AG04449 (cell line): ENCODE measurements at regions of chr2 and their contacts with region 1.

Region 1: GRCh38 chr2:31333527-31334183 is 80.9 kb downstream of the XDH start:
- DNase-seq: no peak
- H3K4me3 ChIP-seq: no peak overlapping the region
- CTCF ChIP-seq: peak; percentile 82

Region 2: DNA sequence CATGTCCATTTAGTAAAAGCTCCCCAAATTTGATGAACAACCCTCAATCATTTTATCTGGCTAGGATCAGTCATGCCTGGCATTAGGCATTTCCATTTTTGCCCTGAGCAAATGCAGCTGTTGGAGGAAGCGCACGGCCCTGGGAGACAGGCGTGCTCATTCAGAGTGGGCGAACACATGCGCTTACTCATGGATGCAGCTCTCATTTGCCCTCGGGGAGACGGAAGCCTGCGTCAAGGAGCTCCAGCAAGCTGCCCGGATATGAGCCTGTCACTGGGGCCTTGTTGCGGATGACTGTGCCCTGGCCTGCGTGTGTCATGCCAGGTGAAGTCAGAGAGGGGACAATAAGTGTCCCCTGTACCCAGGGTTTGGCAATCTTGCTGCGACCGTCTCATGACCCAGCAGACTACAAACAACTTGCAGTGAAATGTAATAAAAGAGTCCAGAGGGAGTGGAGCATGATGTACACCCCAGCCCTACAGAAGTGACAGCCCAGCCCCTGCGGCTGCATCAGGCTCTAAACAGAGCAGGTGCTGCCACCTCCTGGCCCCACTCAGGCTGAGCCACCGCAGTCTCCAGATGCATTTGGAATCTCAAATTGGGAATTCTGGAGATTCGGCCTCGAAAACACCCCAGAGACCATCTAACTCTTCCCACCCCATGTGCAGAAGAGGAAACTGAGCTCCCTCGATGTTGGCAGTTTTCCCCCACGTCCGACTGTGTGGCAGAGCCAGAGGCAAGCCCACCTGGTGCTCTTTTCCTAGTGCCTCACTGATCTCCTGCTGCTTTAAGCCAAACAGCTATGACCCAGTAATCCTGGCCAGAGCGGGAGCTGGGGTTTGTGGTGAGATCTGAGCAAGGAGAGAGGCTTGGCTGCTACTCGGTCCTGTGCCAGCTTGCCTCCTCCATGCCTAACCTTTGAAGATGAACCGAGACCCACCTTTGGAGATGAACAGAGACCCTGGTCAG is 1307.3 kb before region 1 on chr2:
- CTCF ChIA-PET with region 1: no interaction called
- POLR2A ChIA-PET with region 1: no interaction called
- DNase-seq: peak; percentile 26
- H3K4me3 ChIP-seq: no peak overlapping the region
- CTCF ChIP-seq: peak; percentile 75

Region 3: DNA sequence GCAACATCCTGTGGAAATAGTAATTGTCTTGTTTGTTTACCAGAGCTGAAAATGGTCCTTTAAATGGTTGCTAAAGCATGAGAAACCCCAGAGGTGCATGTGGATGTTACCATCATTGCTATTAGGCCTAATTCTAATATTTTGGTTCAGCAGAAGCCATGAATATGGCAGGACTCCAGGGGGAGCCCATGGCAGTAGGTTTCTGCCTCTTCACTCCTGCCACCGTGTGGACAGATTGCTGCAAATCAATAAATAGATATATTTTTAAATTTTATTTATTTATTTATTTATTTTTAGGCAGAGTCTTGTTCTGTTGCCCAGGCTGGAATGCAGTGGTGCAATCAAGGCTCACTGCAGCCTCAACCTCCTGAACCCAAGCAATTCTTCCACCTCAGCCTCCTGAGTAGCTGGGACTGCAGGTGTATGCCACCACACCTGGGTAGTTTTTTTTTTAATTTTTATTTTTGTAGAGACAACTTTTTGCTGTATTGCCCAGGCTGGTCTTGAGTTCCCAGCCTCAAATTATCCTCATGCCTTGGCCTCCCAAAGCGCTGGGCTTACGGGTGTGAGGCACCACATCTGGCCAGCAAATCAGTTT is 471.5 kb before region 1 on chr2:
- CTCF ChIA-PET with region 1: interaction called, 37 read pairs
- POLR2A ChIA-PET with region 1: no interaction called
- DNase-seq: peak; percentile 17
- H3K4me3 ChIP-seq: no peak overlapping the region
- CTCF ChIP-seq: peak; percentile 68

Region 4: DNA sequence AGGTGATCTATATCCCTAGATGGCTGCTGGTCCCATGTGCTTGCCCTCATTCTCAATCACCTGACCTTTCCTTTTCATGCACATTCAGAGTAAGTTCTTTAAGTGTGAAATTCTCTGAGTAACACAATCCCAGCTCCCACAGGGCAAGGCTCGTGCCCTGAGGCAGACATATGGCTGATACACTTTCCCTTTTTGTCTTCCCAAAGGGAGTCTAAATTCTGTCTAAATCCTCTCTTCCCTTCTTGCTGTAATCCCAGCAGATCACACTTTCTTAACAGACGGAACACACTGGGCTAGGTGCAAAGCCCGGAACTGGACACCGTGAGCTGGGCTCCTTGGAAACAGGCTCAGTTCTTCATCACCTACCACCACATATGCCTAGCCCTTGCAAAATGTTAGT is 343.0 kb before region 1 on chr2:
- CTCF ChIA-PET with region 1: no interaction called
- POLR2A ChIA-PET with region 1: no interaction called
- DNase-seq: no peak
- H3K4me3 ChIP-seq: no peak overlapping the region
- CTCF ChIP-seq: no peak

Region 5: GRCh38 chr2:31101701-31102100 is 232.0 kb before region 1 on chr2:
- CTCF ChIA-PET with region 1: no interaction called
- POLR2A ChIA-PET with region 1: no interaction called
- DNase-seq: no peak
- H3K4me3 ChIP-seq: no peak overlapping the region
- CTCF ChIP-seq: no peak

Region 6: GRCh38 chr2:31170071-31170698 is 163.5 kb before region 1 on chr2:
- CTCF ChIA-PET with region 1: interaction called, 47 read pairs
- POLR2A ChIA-PET with region 1: no interaction called
- DNase-seq: peak; percentile 5
- H3K4me3 ChIP-seq: no peak overlapping the region
- CTCF ChIP-seq: peak; percentile 94

Region 7: GRCh38 chr2:31297751-31298150 is 35.9 kb before region 1 on chr2:
- CTCF ChIA-PET with region 1: interaction called, 12 read pairs
- POLR2A ChIA-PET with region 1: no interaction called
- DNase-seq: no peak
- H3K4me3 ChIP-seq: no peak overlapping the region
- CTCF ChIP-seq: no peak

Region 8: DNA sequence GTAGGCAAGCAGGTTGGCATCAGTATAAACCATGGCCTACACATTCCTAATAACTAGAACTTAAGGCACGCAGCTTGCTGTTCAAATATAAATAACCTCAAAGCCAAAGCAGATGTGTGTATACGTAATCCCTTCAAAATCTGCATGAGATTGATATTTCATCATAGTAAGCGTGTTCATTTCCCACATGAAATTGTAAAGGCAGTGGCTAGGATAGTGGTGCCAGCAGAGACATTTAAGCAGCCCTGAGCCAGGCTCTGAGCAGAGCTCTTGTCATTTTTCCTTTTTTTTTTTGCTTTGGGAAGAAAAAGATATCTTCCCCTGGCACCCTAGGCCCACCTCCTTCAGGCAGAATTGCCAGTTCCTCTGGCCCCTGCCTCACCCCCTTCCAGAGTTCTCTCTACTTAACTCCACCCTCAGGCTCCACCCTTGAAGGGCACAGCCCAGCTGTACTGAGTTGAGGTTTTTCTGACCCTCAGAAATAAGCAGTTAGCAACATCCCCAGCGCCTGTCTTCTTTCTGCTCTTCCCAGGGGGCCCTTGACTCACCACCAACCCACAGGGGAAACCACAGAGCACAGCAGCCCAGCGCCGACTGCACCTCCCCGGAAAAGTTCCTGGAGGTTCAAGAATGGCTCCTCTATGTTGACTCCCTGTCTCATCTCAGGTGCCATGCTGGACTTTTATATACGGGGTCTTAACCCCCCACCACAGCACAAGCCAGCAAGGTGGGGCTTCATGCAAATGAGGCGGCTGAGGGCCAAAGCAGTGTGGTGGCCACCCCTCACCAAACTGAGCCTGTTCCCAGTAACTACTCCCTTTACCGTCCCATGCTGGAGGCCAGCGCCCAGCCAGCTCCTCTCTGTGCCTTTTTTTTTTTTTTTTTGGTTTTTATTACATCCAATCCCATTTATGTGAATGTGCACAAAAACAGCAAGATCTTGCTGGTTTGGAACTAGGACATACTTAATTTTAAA is 15.0 kb before region 1 on chr2:
- CTCF ChIA-PET with region 1: interaction called, 102 read pairs
- POLR2A ChIA-PET with region 1: no interaction called
- DNase-seq: no peak
- H3K4me3 ChIP-seq: no peak overlapping the region
- CTCF ChIP-seq: no peak

Region 9: DNA sequence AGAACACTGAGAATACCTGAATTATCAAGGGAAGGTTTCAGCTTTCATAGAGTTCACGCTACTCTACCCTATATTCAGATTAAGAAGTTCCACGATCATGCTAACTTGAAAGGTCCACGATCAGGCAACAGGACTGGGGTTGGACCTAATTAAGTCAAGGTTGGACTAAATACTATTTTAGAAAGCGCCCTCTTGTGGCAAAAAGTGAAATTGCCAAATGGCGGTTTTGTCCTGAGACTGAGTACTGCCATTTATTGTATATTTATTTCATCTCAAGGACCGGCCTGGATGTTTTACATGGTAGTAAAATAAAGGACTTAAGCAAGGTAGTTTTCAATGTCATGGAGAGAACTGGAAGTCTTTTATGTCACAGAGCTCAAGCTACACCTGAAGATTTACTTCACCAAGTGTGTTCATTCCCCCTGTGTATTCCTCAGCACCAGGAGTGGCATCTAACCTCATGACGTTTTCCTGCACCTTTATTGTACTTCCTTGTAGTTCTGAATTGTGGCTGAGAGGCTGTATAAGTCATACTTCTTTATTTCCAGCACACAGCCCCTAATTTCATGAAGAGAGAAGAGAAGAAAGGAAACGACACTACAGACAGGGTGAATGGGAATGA is 190.3 kb after region 1 on chr2:
- CTCF ChIA-PET with region 1: interaction called, 32 read pairs
- POLR2A ChIA-PET with region 1: no interaction called
- DNase-seq: no peak
- H3K4me3 ChIP-seq: no peak overlapping the region
- CTCF ChIP-seq: peak; percentile 50